CD14-positive monocyte (primary cell): ENCODE measurements at regions of chr1 and their contacts with region 1.

Region 1: DNA sequence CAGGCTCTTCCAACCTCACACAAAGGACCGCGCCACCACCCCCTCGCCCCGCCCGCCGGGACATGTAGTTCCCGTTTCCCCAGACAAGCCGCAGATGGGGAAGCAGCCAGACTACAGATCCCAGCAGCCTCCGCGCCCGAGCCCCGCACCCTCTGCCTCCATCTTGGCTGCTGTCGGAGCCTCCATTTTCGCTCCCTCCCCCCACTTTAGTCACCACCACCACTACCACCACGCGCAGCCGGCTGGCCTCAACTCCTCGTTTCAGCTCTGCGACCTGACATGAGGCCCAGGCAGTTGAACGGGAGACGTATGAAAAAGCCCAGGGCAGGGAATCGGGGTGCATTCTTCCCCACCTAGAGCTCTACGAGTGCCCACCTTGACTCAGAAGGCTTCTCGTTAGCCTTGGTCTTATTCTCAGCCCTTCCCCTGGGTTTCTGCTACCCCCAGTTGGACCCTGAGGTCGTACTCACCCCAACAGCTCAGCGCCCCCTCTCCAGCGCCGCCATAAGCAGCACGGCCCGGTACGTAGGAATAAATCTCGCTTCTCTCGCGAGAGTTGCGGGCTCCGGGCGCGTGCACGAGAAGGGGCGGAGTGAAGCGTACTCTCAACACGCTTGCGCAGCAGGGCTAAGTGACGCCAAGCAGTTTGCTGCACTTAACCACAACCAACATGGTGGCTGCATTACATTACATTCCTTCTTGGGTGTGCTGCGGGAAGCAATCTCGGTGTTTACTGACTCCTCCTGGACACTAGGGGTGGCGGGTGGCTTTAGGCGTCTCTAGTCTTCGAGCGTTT is at the start of gene CSDE1:
- DNase-seq: peak; percentile 99 to 100 (median 99)
- H3K4me3 ChIP-seq: peak within 1 kb of the TSS; percentile 88 to 98 (median 97)
- H3K4me3 Mint-ChIP-seq: peak within 1 kb of the TSS; percentile 95 to 98
- H3K27ac ChIP-seq: peak within 1 kb of the TSS; percentile 99 to 100
- H3K27ac Mint-ChIP-seq: peak within 1 kb of the TSS; percentile 99 to 100 (median 100)
- H3K4me1 ChIP-seq: peaks cover 31 to 44% of the 10 kb centered on the region in 2 donors
- H3K4me1 Mint-ChIP-seq: peaks cover 46% of the 10 kb centered on the region
- H3K27me3 ChIP-seq: no peaks in the 10 kb centered on the region
- H3K27me3 Mint-ChIP-seq: no peaks in the 10 kb centered on the region
- CTCF ChIP-seq: no peak
- polyA plus RNA-seq, gene CSDE1: 177 to 324 (median 251) TPM

Region 2: DNA sequence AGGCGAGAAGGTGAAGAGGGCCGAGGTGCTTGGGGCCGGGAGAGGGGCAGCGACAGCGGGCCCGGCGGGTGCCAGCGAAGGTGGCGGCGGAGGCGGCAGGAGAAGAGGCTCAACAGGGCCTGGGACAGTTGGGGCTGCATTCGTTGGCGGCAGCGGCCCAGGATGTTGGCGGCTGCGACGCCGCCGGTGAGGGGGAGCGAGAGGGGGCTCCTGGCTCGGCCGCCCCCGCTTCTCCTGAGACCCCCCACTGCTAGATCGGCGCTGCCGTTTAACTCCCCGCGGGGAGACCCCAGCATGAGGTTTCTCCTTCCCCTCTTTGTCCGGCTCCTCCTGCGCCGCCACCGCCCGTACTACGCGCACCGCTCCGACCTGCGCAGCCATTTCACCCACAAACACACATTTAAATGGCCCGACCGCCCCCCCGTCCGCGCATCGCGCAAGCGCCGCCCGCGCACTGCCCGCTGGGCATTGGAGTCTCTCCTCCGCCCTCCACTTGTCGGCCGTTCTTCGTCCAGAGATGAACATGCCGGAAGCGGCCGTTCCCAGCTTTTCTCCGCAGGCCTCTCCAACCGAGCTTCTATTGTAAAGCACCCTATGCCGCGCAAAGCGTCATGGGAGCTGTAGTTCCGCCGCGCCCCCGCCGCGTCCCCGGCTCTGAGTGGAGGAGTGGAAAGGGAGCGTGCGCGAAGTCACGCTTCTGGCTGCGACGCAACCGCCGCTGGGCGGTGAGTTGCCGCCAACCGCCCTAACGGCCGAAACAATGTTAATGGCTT is 945.6 kb before region 1 on chr1 and contains the start of gene RSBN1:
- intact Hi-C with region 1: loop called in 1 of 2 experiments (anchors 5 kb)
- DNase-seq: peak; percentile 98 to 99 (median 98)
- H3K4me3 ChIP-seq: peak within 1 kb of the TSS; percentile 74 to 94 (median 79)
- H3K4me3 Mint-ChIP-seq: peak within 1 kb of the TSS; percentile 95 to 98
- H3K27ac ChIP-seq: peak within 1 kb of the TSS; percentile 83 to 91
- H3K27ac Mint-ChIP-seq: peak within 1 kb of the TSS; percentile 88 to 97 (median 95)
- H3K4me1 ChIP-seq: peaks cover 31 to 39% of the 10 kb centered on the region in 2 donors
- H3K4me1 Mint-ChIP-seq: peaks cover 32% of the 10 kb centered on the region
- H3K27me3 ChIP-seq: no peaks in the 10 kb centered on the region
- H3K27me3 Mint-ChIP-seq: peaks cover 0 to 2% (median 1%) of the 10 kb centered on the region in 3 donors
- CTCF ChIP-seq: no peak
- polyA plus RNA-seq, gene RSBN1: 6.5 to 9.0 (median 8.9) TPM

Region 3: GRCh38 chr1:114511032-114511785 is 246.4 kb before region 1 on chr1 and contains the start of gene TRIM33:
- intact Hi-C with region 1: loop called in 1 of 2 experiments (anchors 5 kb)
- DNase-seq: peak; percentile 89 to 93 (median 90)
- H3K4me3 ChIP-seq: peak within 1 kb of the TSS; percentile 88 to 98 (median 94)
- H3K4me3 Mint-ChIP-seq: peak within 1 kb of the TSS; percentile 96 to 98
- H3K27ac ChIP-seq: peak within 1 kb of the TSS; percentile 97 to 99
- H3K27ac Mint-ChIP-seq: peak within 1 kb of the TSS; percentile 96 to 99 (median 98)
- H3K4me1 ChIP-seq: peaks cover 29 to 42% of the 10 kb centered on the region in 2 donors
- H3K4me1 Mint-ChIP-seq: peaks cover 44% of the 10 kb centered on the region
- H3K27me3 ChIP-seq: no peaks in the 10 kb centered on the region
- H3K27me3 Mint-ChIP-seq: peaks cover 0 to 12% (median 2%) of the 10 kb centered on the region in 3 donors
- CTCF ChIP-seq: no peak
- polyA plus RNA-seq, gene TRIM33: 11.8 to 16.5 (median 13.7) TPM

Region 4: GRCh38 chr1:114716304-114717170 is 41.1 kb before region 1 on chr1 and contains the start of gene NRAS:
- intact Hi-C with region 1: loop called (anchors 2 to 5 kb)
- DNase-seq: peak; percentile 91 to 94 (median 93)
- H3K4me3 ChIP-seq: peak within 1 kb of the TSS; percentile 85 to 100 (median 92)
- H3K4me3 Mint-ChIP-seq: peak within 1 kb of the TSS; percentile 96 to 98
- H3K27ac ChIP-seq: peak within 1 kb of the TSS; percentile 93 to 99
- H3K27ac Mint-ChIP-seq: peak within 1 kb of the TSS; percentile 97 to 100 (median 99)
- H3K4me1 ChIP-seq: peaks cover 13 to 16% of the 10 kb centered on the region in 2 donors
- H3K4me1 Mint-ChIP-seq: peaks cover 14% of the 10 kb centered on the region
- H3K27me3 ChIP-seq: no peaks in the 10 kb centered on the region
- H3K27me3 Mint-ChIP-seq: peaks cover 0 to 1% (median 0%) of the 10 kb centered on the region in 3 donors
- CTCF ChIP-seq: no peak
- polyA plus RNA-seq, gene NRAS: 12.2 to 42.7 (median 40.8) TPM

Region 5: DNA sequence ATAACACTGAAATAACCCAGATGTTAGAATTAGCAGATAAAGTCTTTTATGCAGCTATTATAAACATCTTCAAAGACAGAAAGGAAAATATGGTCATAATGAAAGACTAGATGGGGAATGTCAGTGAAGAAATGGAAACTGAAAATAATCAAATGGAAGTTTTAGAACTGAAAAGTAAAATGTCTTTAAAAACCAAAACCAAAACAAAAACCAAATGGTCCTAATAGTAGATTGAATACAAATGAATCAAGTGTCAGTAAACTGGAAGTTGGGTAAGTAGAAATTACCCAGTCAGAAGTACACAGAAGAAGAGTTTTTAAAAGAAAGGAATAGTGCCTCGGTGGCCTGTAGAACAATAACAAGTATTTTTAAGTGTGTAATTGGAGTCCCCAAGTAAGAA is 169.7 kb after region 1 on chr1:
- intact Hi-C with region 1: no loop called
- DNase-seq: no peak
- H3K4me3 ChIP-seq: no peak overlapping the region
- H3K4me3 Mint-ChIP-seq: no peak overlapping the region
- H3K27ac ChIP-seq: no peak overlapping the region
- H3K27ac Mint-ChIP-seq: no peak overlapping the region
- H3K4me1 ChIP-seq: no peaks in the 10 kb centered on the region
- H3K4me1 Mint-ChIP-seq: no peaks in the 10 kb centered on the region
- H3K27me3 ChIP-seq: no peaks in the 10 kb centered on the region
- H3K27me3 Mint-ChIP-seq: peaks cover 0 to 3% (median 0%) of the 10 kb centered on the region in 3 donors
- CTCF ChIP-seq: no peak